ENCODE measurements at regions of chr12 and their contacts with region 1.

Region 1: DNA sequence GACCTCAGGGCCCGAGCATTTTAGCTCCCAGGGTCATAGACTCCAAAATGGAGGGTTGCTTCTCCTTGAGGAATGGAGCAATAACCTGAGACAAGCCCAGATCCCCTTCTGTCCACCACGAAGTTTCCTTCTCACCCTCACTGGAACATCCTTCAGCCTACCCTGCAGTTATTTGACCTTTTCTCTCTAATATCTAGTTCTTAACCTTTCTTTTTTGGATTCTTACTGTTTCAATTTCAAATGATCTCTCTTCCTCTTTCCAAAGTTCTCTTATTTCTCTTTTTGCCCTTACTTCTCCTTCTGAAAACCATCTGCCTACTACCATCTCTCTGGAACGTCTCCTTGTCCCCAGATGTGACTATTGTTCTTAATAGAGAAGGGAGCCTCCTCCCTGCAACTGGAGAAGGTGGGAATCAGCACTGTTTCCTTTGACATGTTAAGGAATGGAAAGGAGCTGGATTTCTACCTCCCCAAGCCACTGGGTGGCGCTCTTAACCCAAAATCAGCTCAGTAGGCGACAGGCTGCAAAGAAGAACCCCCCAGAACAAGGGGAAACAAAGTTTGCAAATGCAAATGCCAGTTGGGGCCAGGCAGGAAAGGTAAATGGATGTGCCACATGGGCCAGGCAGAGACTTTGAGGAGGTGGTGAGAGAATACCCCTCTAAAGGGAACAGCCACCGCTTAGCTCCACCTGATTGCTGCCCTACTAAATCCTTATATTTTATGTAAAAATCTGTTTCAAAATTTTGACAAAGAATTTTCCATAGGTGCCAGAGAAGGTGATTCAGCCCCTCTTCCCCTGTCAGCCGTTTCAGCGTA is 22.4 kb upstream of the PDE1B start:
- DNase-seq: no peak
- ATAC-seq: peak; percentile 58
- H3K4me3 ChIP-seq: no peak overlapping the region
- H3K27ac ChIP-seq: no peak overlapping the region
- H3K4me1 ChIP-seq: no peaks in the 10 kb centered on the region
- H3K27me3 ChIP-seq: no peaks in the 10 kb centered on the region
- CTCF ChIP-seq: peak; percentile 44 to 60 (median 58)
- EP300 ChIP-seq: no peak
- POLR2A ChIP-seq: no peak
- RAD21 ChIP-seq: peak; percentile 28; the same call in 1 of the 2 replicates

Region 2: DNA sequence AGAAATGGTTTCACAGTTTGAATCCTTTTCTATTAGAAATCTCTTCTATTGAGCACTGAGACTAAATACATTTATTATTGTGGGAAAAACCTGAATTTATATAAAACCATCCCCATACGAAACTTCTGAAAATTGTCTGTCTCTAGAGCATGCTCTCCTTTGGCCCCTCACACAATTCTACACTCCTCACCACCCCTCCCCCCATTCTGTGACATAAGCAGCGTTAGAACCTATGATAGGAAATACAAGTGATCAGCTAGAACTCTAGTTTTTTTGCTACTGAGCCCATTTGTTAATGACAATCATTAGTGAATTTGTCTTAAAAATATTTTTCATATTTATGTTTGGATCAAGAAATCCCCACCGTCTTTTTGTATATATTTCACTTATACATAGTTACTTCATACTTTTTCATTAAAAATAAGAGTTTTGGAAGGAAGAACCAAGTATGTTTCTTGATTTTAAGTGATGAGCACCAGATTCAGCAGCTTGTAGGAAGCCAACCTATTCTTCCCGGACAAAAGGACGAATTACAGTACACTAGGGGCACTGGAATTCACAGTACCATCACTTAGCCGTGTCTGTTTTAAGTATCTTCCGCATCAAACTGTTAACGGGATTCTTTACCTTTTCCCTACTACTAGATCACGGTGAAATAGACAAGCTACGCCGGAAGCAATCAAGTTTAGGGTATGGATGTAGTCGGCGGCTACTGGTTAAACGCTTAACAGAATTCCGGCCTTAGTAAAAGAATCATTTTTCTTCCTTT is 54.3 kb before region 1 on chr12:
- CTCF ChIA-PET with region 1: no interaction called
- POLR2A ChIA-PET with region 1: no interaction called
- RAD21 ChIA-PET with region 1: no interaction called
- SMC1A ChIA-PET with region 1: no interaction called
- in situ Hi-C with region 1: no loop called
- intact Hi-C with region 1: no loop called
- DNase-seq: no peak
- ATAC-seq: no peak
- H3K4me3 ChIP-seq: peak overlapping the region; percentile 34
- H3K27ac ChIP-seq: no peak overlapping the region
- H3K4me1 ChIP-seq: no peaks in the 10 kb centered on the region; the same call in 1 of the 2 replicates
- H3K27me3 ChIP-seq: no peaks in the 10 kb centered on the region; a peak in 1 of 4 replicates
- CTCF ChIP-seq: no peak
- EP300 ChIP-seq: no peak
- POLR2A ChIP-seq: no peak
- RAD21 ChIP-seq: no peak

Region 3: DNA sequence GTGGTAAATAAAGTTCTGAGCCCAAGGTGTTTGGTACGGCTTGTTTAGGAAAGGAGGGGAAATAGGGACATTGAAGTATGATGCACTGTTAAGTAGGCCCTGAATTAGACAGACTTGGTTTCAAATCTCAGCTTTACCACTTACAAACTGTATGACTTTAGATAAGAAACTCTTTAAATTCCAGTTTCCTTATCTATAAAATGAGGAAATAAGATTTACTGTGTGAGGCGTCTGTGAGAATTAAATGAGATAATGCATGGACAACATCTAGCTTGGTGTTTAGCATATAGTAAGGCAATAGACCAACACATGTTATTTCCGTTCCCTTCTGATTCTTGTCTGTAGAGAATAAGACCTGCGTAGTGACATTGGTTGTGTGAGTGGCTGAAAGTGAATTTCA is 22.5 kb before region 1 on chr12:
- CTCF ChIA-PET with region 1: interaction called, 14 read pairs
- POLR2A ChIA-PET with region 1: no interaction called
- RAD21 ChIA-PET with region 1: no interaction called
- SMC1A ChIA-PET with region 1: interaction called, 3 read pairs
- in situ Hi-C with region 1: no loop called
- intact Hi-C with region 1: no loop called
- DNase-seq: no peak
- ATAC-seq: no peak
- H3K4me3 ChIP-seq: no peak overlapping the region
- H3K27ac ChIP-seq: no peak overlapping the region
- H3K4me1 ChIP-seq: peaks cover under 1% of the 10 kb centered on the region; the same call in 1 of the 2 replicates
- H3K27me3 ChIP-seq: no peaks in the 10 kb centered on the region
- CTCF ChIP-seq: no peak
- EP300 ChIP-seq: no peak
- POLR2A ChIP-seq: no peak
- RAD21 ChIP-seq: no peak

Region 4: DNA sequence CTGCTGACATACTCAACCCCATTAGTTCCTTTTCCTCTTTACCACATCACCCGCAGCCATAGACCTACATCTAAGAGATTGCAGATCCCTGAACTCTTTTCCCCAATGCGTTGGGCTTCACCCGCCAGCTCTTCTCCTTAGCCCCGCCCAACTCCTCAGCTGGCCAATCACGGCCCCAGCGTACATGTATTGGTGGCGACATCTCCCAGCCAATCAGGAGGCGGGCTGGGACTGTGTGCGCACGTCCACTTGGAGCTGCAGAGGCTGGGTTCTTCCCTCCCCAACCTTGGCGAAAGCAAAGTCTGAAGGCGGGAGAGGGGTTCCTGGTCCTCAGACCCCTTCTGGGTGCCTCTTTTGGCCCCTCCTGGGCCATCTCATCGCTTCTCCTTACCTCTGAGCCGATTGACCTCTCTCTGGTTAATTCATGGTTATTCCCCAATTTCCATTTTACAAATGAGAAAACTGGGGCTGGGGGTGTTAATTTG is 33.4 kb after region 1 on chr12:
- CTCF ChIA-PET with region 1: interaction called, 15 read pairs
- POLR2A ChIA-PET with region 1: interaction called, 3 read pairs
- RAD21 ChIA-PET with region 1: interaction called, 3 read pairs
- SMC1A ChIA-PET with region 1: no interaction called
- in situ Hi-C with region 1: no loop called
- intact Hi-C with region 1: no loop called
- DNase-seq: peak; percentile 65
- ATAC-seq: peak; percentile 100
- H3K4me3 ChIP-seq: peak overlapping the region; percentile 63
- H3K27ac ChIP-seq: no peak overlapping the region; the same call in 1 of the 2 replicates
- H3K4me1 ChIP-seq: peaks cover 19% of the 10 kb centered on the region
- H3K27me3 ChIP-seq: no peaks in the 10 kb centered on the region
- CTCF ChIP-seq: no peak
- EP300 ChIP-seq: no peak
- POLR2A ChIP-seq: peak; percentile 66
- RAD21 ChIP-seq: no peak

Region 5: DNA sequence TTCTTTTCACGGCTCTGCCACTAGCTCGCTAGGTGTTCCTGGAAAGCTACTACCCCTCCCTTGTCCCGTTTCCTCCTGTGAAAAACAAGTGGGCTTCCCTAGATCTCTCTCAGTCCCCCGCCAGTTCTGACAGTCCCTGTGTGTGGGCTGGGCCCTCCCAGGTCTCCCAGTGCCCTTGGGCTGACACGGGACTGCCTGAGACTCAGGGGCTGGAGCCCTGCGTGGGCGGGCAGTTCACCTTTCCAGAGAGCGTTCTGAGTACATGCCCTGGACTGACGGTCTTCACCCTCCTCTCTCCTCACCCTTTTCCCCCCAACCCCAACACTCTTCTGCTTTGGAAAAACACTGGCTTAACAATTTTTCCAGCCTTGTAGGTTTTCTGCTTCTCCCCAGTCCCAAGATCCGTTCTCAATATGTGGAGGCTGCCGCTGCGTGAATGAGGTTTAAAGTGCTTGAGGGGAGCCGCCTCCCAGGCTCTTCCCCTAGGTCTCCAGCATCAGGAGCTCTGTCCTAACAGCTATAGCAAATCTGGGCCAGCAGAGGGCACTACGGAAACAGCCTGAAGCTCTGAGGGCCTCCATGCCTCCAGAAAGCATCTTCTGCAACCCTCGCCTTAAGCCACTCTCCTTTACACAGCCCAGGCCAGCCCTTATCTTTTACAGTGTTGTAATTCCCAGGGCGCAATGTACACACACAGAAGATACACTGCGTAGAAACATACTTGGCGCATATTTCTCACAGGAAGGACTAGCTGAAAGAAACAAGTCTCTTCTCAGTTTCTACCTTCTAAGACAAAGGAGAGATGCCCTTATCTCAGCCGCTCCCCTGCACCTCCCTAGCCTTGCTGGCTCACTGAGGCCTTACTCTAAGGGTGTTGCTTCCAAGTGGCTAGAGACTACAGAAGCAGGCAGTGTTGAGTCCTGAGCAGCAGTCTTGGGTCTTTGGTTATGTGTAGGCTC is 131.6 kb after region 1 on chr12:
- CTCF ChIA-PET with region 1: no interaction called
- POLR2A ChIA-PET with region 1: no interaction called
- RAD21 ChIA-PET with region 1: no interaction called
- SMC1A ChIA-PET with region 1: no interaction called
- in situ Hi-C with region 1: no loop called
- intact Hi-C with region 1: no loop called
- DNase-seq: no peak
- ATAC-seq: peak; percentile 93
- H3K4me3 ChIP-seq: no peak overlapping the region
- H3K27ac ChIP-seq: no peak overlapping the region
- H3K4me1 ChIP-seq: no peaks in the 10 kb centered on the region
- H3K27me3 ChIP-seq: peaks cover 0 to 2% of the 10 kb centered on the region in 2 experiments; a peak in 2 of 4 replicates
- CTCF ChIP-seq: peak; percentile 68 to 81 (median 70)
- EP300 ChIP-seq: no peak
- POLR2A ChIP-seq: no peak
- RAD21 ChIP-seq: peak; percentile 51